ENCODE measurements at regions of chr11 and their contacts with region 1.

Region 1: GRCh38 chr11:115504276-115505158 is at the start of gene CADM1:
- DNase-seq: peak; percentile 98
- H3K4me3 ChIP-seq: peak within 1 kb of the TSS; percentile 7 to 89 (median 82)
- H3K27ac ChIP-seq: peak within 1 kb of the TSS; percentile 75 to 90 (median 85)
- H3K4me1 ChIP-seq: peaks cover 3 to 11% of the 10 kb centered on the region in 2 donors
- H3K27me3 ChIP-seq: no peaks in the 10 kb centered on the region
- CTCF ChIP-seq: peak; percentile 38 to 77 (median 68)
- POLR2A ChIP-seq: peak; percentile 89 to 99
- total RNA-seq, gene CADM1: 89.9 to 351 (median 235) TPM

Region 2: GRCh38 chr11:114586797-114587196 is 917.7 kb before region 1 on chr11:
- intact Hi-C with region 1: no loop called
- DNase-seq: no peak
- H3K4me3 ChIP-seq: no peak overlapping the region
- H3K27ac ChIP-seq: no peak overlapping the region
- H3K4me1 ChIP-seq: no peaks in the 10 kb centered on the region
- H3K27me3 ChIP-seq: no peaks in the 10 kb centered on the region
- CTCF ChIP-seq: no peak
- POLR2A ChIP-seq: no peak

Region 3: DNA sequence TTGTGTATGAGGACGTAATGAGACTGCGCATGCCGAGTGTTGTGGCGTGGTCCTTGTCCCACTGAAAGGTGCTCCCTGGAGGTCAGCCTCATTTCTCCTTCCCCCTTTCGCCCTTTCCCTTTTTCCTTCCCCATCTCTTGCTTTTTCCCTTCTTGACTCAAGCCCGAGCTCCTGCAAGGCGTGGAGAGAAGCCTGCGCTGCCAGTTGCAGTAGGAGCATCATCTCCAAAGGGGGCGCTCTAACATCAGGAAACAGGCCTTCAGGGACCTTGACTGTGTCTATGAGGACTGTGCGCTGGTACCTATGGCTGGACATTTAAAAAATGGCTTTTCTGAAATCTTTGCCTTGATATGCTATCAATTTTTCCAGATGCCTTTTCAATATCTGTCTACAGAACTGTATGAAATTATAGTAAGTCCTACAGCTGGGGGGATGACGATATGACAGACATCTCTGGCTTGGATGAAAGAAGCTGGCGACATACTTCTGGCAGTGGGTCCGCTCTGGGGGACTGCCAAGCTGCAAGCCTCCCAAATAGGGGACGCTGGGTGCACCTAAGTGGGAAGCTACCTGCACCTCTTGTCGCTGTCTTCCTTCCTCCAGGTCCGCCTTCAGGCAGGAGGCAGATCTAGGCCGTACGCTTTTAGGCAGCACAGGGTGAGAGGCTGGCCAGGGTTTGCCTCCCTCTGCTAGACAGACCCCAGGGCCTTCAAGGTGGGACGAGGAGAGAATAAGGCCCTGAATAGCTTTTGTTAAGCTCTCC is 729.7 kb before region 1 on chr11:
- intact Hi-C with region 1: loop called (anchors 10 kb)
- DNase-seq: peak; percentile 44 to 52
- H3K4me3 ChIP-seq: no peak overlapping the region
- H3K27ac ChIP-seq: no peak overlapping the region
- H3K4me1 ChIP-seq: no peaks in the 10 kb centered on the region
- H3K27me3 ChIP-seq: no peaks in the 10 kb centered on the region
- CTCF ChIP-seq: peak; percentile 36 to 81 (median 64)
- POLR2A ChIP-seq: no peak

Region 4: GRCh38 chr11:115347138-115347537 is 157.4 kb before region 1 on chr11:
- intact Hi-C with region 1: loop called (anchors 10 kb)
- DNase-seq: no peak
- H3K4me3 ChIP-seq: no peak overlapping the region
- H3K27ac ChIP-seq: no peak overlapping the region
- H3K4me1 ChIP-seq: peaks cover 21 to 22% of the 10 kb centered on the region in 2 donors
- H3K27me3 ChIP-seq: no peaks in the 10 kb centered on the region
- CTCF ChIP-seq: no peak
- POLR2A ChIP-seq: no peak

Region 5: GRCh38 chr11:115544422-115544948 is 40.0 kb after region 1 on chr11:
- intact Hi-C with region 1: no loop called
- DNase-seq: no peak
- H3K4me3 ChIP-seq: no peak overlapping the region
- H3K27ac ChIP-seq: no peak overlapping the region
- H3K4me1 ChIP-seq: peaks cover 0 to 8% of the 10 kb centered on the region in 2 donors
- H3K27me3 ChIP-seq: no peaks in the 10 kb centered on the region
- CTCF ChIP-seq: no peak
- POLR2A ChIP-seq: no peak